ENCODE measurements at regions of chr10 and their contacts with region 1.

Region 1: DNA sequence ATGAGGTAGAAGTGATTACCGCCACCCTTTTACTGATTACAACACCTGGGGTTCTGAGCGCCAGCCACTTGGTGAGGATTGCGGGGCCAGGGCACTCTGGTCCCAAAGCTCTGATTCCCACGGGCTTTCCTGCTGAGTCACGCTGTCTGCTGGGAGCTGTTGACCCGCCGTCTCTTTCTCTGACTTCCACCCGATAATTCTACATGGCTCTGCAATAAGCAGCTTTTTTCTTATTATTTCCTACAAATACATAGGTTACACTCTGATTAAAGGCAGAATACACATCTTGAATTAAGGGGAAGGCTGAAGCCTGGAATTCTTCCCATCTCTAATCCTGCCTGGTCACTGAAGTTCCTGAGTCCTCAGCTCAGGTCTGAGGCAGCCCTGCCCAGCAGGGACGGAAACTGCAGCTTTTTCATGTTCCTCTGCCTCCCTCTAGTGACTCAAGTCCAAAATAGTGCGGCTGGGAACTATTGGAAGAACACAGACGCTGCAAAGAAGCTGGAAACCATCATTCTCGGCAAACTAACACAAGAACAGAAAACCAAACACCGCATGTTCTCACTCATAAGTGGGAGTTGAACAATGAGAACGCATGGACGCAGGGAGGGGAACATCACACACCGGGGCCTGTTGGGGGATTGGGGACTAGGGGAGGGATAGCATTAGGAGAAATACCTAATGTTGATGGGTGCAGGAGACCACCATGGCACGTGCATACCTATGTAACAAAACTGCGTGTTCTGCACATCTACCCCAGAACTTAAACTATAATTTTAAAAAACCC is 178.3 kb downstream of the PRKCQ start:
- DNase-seq: peak; percentile 48 to 80
- ATAC-seq: peak; percentile 90 to 97 (median 96)
- H3K4me3 ChIP-seq: peak overlapping the region in 8 of 10 donors; percentile 23 to 54 (median 41)
- H3K27ac ChIP-seq: peak overlapping the region in 7 of 10 donors; percentile 21 to 87 (median 38)
- H3K4me1 ChIP-seq: peaks cover 0 to 48% (median 8%) of the 10 kb centered on the region in 9 donors
- H3K27me3 ChIP-seq: peaks cover 0 to 7% (median 0%) of the 10 kb centered on the region in 7 donors
- CTCF ChIP-seq: peak; percentile 57 to 83 (median 76)

Region 2: GRCh38 chr10:6014241-6014761 is 387.5 kb before region 1 on chr10:
- intact Hi-C with region 1: loop called in 9 of 10 experiments (anchors 1 to 10 kb)
- DNase-seq: peak in 1 of 2 donors; percentile 75
- ATAC-seq: peak in 7 of 8 donors; percentile 23 to 63 (median 55)
- H3K4me3 ChIP-seq: peak overlapping the region in 1 of 10 donors; percentile 33
- H3K27ac ChIP-seq: peak overlapping the region in 2 of 10 donors; percentile 11 to 48
- H3K4me1 ChIP-seq: peaks cover 0 to 21% (median 8%) of the 10 kb centered on the region in 9 donors
- H3K27me3 ChIP-seq: no peaks in the 10 kb centered on the region
- CTCF ChIP-seq: peak; percentile 52 to 88 (median 79)

Region 3: GRCh38 chr10:6108603-6109443 is 292.9 kb before region 1 on chr10:
- intact Hi-C with region 1: loop called (anchors 2 to 10 kb)
- DNase-seq: no peak
- ATAC-seq: peak in 4 of 8 donors; percentile 18 to 42 (median 34)
- H3K4me3 ChIP-seq: no peak overlapping the region
- H3K27ac ChIP-seq: no peak overlapping the region
- H3K4me1 ChIP-seq: peaks cover 0 to 16% (median 11%) of the 10 kb centered on the region in 9 donors
- H3K27me3 ChIP-seq: no peaks in the 10 kb centered on the region
- CTCF ChIP-seq: peak; percentile 53 to 85 (median 75)

Region 4: DNA sequence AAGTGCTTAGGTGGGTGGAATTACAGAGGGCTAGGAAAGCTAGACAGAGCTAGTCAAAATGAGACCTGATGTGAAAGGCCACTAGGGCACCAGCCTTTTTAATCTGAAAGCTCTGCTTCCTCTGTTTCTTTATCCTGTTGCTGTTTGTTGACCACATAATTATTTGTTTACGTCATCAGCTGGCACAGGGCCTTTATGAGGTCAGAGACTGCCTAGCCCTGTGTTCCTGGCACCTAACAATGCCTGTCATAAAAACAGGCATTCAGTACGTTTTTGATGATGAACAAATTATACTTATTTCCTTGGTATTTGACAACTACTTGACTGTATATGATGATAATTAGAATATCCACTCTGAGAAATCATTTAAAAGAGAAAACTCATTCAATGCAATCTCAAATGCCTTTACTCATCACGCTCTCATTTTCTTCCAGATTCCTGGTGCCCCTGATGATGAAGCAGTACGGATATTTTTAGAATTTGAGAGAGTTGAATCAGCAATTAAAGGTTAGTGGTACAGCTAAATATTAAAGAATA is 286.9 kb before region 1 on chr10:
- intact Hi-C with region 1: loop called in 1 of 10 experiments (anchors 5 kb)
- DNase-seq: peak in 1 of 2 donors; percentile 32
- ATAC-seq: peak in 3 of 8 donors; percentile 42 to 65 (median 56)
- H3K4me3 ChIP-seq: no peak overlapping the region
- H3K27ac ChIP-seq: peak overlapping the region in 9 of 10 donors; percentile 26 to 73 (median 55)
- H3K4me1 ChIP-seq: peaks cover 0 to 39% (median 26%) of the 10 kb centered on the region in 9 donors
- H3K27me3 ChIP-seq: no peaks in the 10 kb centered on the region
- CTCF ChIP-seq: no peak

Region 5: GRCh38 chr10:6275022-6275997 is 126.4 kb before region 1 on chr10:
- intact Hi-C with region 1: loop called in 1 of 10 experiments (anchors 10 kb)
- DNase-seq: peak; percentile 84 to 86
- ATAC-seq: peak; percentile 92 to 99 (median 96)
- H3K4me3 ChIP-seq: peak overlapping the region in 6 of 10 donors; percentile 17 to 38 (median 26)
- H3K27ac ChIP-seq: peak overlapping the region in 9 of 10 donors; percentile 46 to 92 (median 67)
- H3K4me1 ChIP-seq: peaks cover 0 to 53% (median 6%) of the 10 kb centered on the region in 9 donors
- H3K27me3 ChIP-seq: no peaks in the 10 kb centered on the region
- CTCF ChIP-seq: no peak

Region 6: DNA sequence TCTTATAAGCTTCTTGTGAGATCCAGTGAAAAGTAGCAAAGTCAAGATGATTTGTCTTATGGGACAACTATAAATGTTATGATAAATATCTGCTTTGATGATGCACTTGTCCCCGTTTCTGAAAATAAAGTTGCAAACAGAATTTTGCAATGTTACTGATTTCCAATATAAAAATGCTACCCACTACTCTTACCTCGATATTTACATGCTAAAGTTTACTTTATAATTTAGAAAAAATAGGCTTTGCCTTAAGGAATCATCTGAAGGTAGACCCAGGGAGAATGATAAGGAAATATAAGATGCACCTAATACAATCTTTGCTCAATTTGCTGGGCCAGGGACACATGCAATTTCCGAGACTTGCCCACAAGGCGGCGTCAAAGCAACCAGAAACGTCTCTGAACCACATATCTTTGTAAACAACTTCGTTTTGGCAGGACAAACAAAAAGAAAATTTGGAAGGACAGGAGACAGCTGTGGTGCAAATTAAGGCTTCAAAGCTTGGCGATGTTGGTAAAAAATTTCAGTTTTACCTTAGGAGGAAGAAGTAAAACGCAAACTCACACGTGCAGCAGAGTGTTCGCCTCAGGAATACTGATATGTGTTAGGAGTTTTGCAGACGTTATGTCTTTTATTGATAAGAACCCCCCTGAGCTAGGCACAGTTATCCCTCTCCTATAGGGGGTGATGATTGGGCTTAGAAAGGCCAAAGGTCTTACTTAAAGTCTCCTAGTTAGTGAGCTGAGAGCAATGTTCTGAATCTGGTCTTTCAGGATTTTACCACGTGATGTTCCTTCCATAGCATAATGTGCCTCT is 44.0 kb after region 1 on chr10:
- intact Hi-C with region 1: no loop called
- DNase-seq: peak; percentile 20 to 35
- ATAC-seq: no peak
- H3K4me3 ChIP-seq: peak overlapping the region in 3 of 10 donors; percentile 13 to 16 (median 14)
- H3K27ac ChIP-seq: no peak overlapping the region
- H3K4me1 ChIP-seq: peaks cover 0 to 4% (median 0%) of the 10 kb centered on the region in 9 donors
- H3K27me3 ChIP-seq: no peaks in the 10 kb centered on the region
- CTCF ChIP-seq: peak in 8 of 9 donors; percentile 14 to 67 (median 51)